ENCODE measurements at regions of chr2 and their contacts with region 1.

Region 1: GRCh38 chr2:221554769-221555493 is 17.2 kb downstream of the EPHA4 start:
- DNase-seq: no peak
- ATAC-seq: peak; percentile 62 to 86
- H3K4me3 ChIP-seq: peak overlapping the region in 2 of 4 donors; percentile 3 to 10
- H3K27ac ChIP-seq: peak overlapping the region; percentile 8 to 60 (median 24)
- H3K4me1 ChIP-seq: peaks cover 29 to 31% of the 10 kb centered on the region in 2 donors
- H3K27me3 ChIP-seq: no peaks in the 10 kb centered on the region
- CTCF ChIP-seq: no peak
- POLR2A ChIP-seq: no peak

Region 2: DNA sequence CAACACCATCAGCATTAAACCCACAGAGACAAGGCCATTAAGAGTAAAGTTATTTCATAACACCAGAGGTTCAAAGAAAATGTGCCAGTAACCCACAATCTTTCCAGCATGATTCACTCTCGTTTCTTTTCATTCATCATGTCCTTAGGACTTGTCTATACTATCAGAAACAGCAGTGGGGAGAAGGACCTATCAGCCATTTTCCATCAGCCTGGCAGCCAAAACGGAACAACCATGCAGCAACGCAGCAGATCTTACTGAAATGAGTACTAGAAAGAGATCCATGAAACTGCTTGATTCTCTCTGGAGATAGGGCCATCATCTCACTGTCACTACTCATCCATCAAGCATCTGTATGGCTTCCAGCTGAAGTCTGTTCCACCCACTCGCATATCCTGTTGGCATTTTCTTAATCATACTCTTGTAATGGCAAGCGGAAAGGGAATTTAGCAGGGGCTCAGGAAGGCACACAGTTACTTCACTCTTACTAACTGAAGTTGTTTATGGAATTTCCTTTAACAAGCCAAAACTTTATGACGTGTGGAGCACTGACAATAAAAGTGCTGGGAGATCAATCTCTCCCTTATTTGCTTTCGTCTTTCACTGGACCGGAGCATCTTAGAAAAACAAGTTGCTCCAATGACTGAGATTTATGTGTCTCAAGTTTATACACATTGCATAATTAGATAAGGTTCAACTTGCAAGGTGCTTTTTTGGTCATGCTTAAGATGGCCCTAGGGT is 52.5 kb before region 1 on chr2:
- in situ Hi-C with region 1: no loop called
- intact Hi-C with region 1: loop called (anchors 5 kb)
- DNase-seq: no peak
- ATAC-seq: no peak
- H3K4me3 ChIP-seq: no peak overlapping the region
- H3K27ac ChIP-seq: no peak overlapping the region
- H3K4me1 ChIP-seq: peaks cover 15 to 20% of the 10 kb centered on the region in 2 donors
- H3K27me3 ChIP-seq: no peaks in the 10 kb centered on the region
- CTCF ChIP-seq: no peak
- POLR2A ChIP-seq: no peak